CD14-positive monocyte (primary cell): ENCODE measurements at regions of chr17 and their contacts with region 1.

Region 1: GRCh38 chr17:43576563-43577229 is 30.6 kb upstream of the ETV4 start:
- DNase-seq: peak; percentile 62 to 67 (median 62)
- H3K4me3 ChIP-seq: no peak overlapping the region
- H3K4me3 Mint-ChIP-seq: no peak overlapping the region
- H3K27ac ChIP-seq: no peak overlapping the region
- H3K27ac Mint-ChIP-seq: no peak overlapping the region
- H3K4me1 ChIP-seq: no peaks in the 10 kb centered on the region
- H3K4me1 Mint-ChIP-seq: peaks cover 3% of the 10 kb centered on the region
- H3K27me3 ChIP-seq: peaks cover 0 to 5% of the 10 kb centered on the region in 2 donors
- H3K27me3 Mint-ChIP-seq: peaks cover 22 to 28% (median 24%) of the 10 kb centered on the region in 3 donors
- CTCF ChIP-seq: peak; percentile 93

Region 2: GRCh38 chr17:43615330-43616028 is 38.8 kb after region 1 on chr17:
- intact Hi-C with region 1: no loop called
- DNase-seq: peak in 1 of 3 donors; percentile 10
- H3K4me3 ChIP-seq: no peak overlapping the region
- H3K4me3 Mint-ChIP-seq: no peak overlapping the region
- H3K27ac ChIP-seq: no peak overlapping the region
- H3K27ac Mint-ChIP-seq: peak overlapping the region in 1 of 7 donors; percentile 26
- H3K4me1 ChIP-seq: no peaks in the 10 kb centered on the region
- H3K4me1 Mint-ChIP-seq: peaks cover 9% of the 10 kb centered on the region
- H3K27me3 ChIP-seq: peaks cover 0 to 2% of the 10 kb centered on the region in 2 donors
- H3K27me3 Mint-ChIP-seq: peaks cover 6 to 18% (median 16%) of the 10 kb centered on the region in 3 donors
- CTCF ChIP-seq: no peak

Region 3: GRCh38 chr17:43673516-43674323 is 97.0 kb after region 1 on chr17:
- intact Hi-C with region 1: loop called (anchors 1 kb)
- DNase-seq: peak; percentile 50 to 69 (median 59)
- H3K4me3 ChIP-seq: no peak overlapping the region
- H3K4me3 Mint-ChIP-seq: no peak overlapping the region
- H3K27ac ChIP-seq: no peak overlapping the region
- H3K27ac Mint-ChIP-seq: no peak overlapping the region
- H3K4me1 ChIP-seq: peaks cover 9 to 19% of the 10 kb centered on the region in 2 donors
- H3K4me1 Mint-ChIP-seq: peaks cover 17% of the 10 kb centered on the region
- H3K27me3 ChIP-seq: no peaks in the 10 kb centered on the region
- H3K27me3 Mint-ChIP-seq: peaks cover 0 to 4% (median 2%) of the 10 kb centered on the region in 3 donors
- CTCF ChIP-seq: peak; percentile 94

Region 4: GRCh38 chr17:43760254-43760852 is 183.7 kb after region 1 on chr17:
- intact Hi-C with region 1: loop called (anchors 5 kb)
- DNase-seq: peak; percentile 69 to 82 (median 78)
- H3K4me3 ChIP-seq: no peak overlapping the region
- H3K4me3 Mint-ChIP-seq: no peak overlapping the region
- H3K27ac ChIP-seq: no peak overlapping the region
- H3K27ac Mint-ChIP-seq: peak overlapping the region in 1 of 7 donors; percentile 45
- H3K4me1 ChIP-seq: peaks cover 13 to 17% of the 10 kb centered on the region in 2 donors
- H3K4me1 Mint-ChIP-seq: peaks cover 20% of the 10 kb centered on the region
- H3K27me3 ChIP-seq: peaks cover 9 to 27% of the 10 kb centered on the region in 2 donors
- H3K27me3 Mint-ChIP-seq: peaks cover 21 to 42% (median 26%) of the 10 kb centered on the region in 3 donors
- CTCF ChIP-seq: peak; percentile 96

Region 5: GRCh38 chr17:43766413-43767052 is 189.8 kb after region 1 on chr17:
- intact Hi-C with region 1: loop called (anchors 5 kb)
- DNase-seq: peak; percentile 34 to 53 (median 52)
- H3K4me3 ChIP-seq: no peak overlapping the region
- H3K4me3 Mint-ChIP-seq: no peak overlapping the region
- H3K27ac ChIP-seq: no peak overlapping the region
- H3K27ac Mint-ChIP-seq: peak overlapping the region in 4 of 7 donors; percentile 37 to 62 (median 60)
- H3K4me1 ChIP-seq: peaks cover 59 to 61% of the 10 kb centered on the region in 2 donors
- H3K4me1 Mint-ChIP-seq: peaks cover 67% of the 10 kb centered on the region
- H3K27me3 ChIP-seq: no peaks in the 10 kb centered on the region
- H3K27me3 Mint-ChIP-seq: no peaks in the 10 kb centered on the region
- CTCF ChIP-seq: peak; percentile 93